Activated CD4-positive, alpha-beta memory T cell treated with anti-CD3 and anti-CD28 coated beads, Interleukin-2, amount 10 ng/mL, durations not matched to agents 7 days and 5 days (primary cell): ENCODE measurements at regions of chr3 and their contacts with region 1.

Region 1: GRCh38 chr3:128969993-128970739 is 23.7 kb downstream of the CFAP92 start:
- DNase-seq: peak; percentile 69
- H3K4me3 Mint-ChIP-seq: no peak overlapping the region
- H3K27ac Mint-ChIP-seq: no peak overlapping the region
- H3K4me1 Mint-ChIP-seq: peaks cover 10% of the 10 kb centered on the region
- H3K27me3 Mint-ChIP-seq: peaks cover 9% of the 10 kb centered on the region

Region 2: GRCh38 chr3:128910006-128910405 is 60.2 kb before region 1 on chr3:
- CTCF ChIA-PET with region 1: no interaction called
- POLR2A ChIA-PET with region 1: no interaction called
- DNase-seq: no peak
- H3K4me3 Mint-ChIP-seq: no peak overlapping the region
- H3K27ac Mint-ChIP-seq: no peak overlapping the region
- H3K4me1 Mint-ChIP-seq: no peaks in the 10 kb centered on the region
- H3K27me3 Mint-ChIP-seq: no peaks in the 10 kb centered on the region

Region 3: DNA sequence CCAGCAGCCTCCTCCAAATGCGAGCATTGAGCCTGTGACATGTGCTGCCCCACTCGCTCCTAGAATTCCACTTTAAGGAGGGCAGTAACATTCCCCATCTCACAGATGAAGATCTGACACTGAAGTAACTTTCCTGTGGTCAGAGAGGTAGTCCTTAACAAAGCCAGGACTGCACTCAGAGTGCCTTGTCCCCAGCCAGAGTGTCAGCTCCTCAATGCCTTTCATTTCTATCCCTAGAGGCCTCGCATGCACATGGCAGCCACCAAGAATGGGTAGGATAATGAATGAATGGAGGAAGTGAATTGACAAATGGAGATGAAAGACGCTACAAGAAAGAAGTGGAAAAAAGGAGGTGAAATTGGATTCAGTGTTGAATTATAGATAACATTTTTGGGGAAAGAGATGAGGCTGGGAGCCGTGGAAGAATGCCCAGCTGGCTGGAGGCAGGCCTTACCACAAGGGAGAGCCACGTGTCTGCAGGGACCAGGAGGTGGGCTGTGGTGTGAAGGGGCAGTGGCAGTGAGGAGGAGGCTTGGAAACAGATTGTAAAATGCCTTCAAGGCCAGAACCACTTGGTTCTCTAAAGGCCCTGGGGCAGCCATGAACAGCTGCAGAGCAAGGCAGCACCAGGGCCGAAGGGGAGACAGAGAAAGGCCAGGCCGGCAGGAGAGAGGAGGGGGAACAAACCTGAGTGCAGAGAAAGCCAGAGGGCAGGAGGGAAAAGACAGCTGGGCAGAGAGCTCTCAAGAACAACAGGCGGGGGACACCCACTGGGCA is 13.3 kb after region 1 on chr3:
- CTCF ChIA-PET with region 1: interaction called, 11 read pairs
- POLR2A ChIA-PET with region 1: no interaction called
- DNase-seq: no peak
- H3K4me3 Mint-ChIP-seq: no peak overlapping the region
- H3K27ac Mint-ChIP-seq: no peak overlapping the region
- H3K4me1 Mint-ChIP-seq: no peaks in the 10 kb centered on the region
- H3K27me3 Mint-ChIP-seq: peaks cover 5% of the 10 kb centered on the region

Region 4: DNA sequence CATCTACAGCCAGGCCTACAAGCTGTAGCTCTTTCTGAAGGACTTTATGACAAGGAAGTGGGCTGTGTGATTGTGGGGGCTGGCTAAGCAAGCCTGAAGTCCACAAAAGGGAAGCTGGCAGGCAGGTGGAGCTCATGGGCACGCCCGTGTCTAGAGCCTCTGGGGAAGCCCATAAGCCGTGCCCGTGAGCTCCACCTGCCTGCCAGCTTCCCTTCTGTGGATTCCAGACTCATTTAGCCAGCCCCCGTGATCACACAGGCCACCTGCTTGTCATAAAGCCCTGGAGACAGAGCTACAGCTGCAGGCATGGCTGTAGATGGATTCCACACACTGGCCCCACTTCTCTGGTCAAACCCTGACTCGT is 46.2 kb after region 1 on chr3:
- CTCF ChIA-PET with region 1: interaction called, 78 read pairs
- POLR2A ChIA-PET with region 1: interaction called, 13 read pairs
- DNase-seq: peak; percentile 68
- H3K4me3 Mint-ChIP-seq: peak overlapping the region; percentile 64
- H3K27ac Mint-ChIP-seq: peak overlapping the region; percentile 87
- H3K4me1 Mint-ChIP-seq: peaks cover 37% of the 10 kb centered on the region
- H3K27me3 Mint-ChIP-seq: no peaks in the 10 kb centered on the region

Region 5: DNA sequence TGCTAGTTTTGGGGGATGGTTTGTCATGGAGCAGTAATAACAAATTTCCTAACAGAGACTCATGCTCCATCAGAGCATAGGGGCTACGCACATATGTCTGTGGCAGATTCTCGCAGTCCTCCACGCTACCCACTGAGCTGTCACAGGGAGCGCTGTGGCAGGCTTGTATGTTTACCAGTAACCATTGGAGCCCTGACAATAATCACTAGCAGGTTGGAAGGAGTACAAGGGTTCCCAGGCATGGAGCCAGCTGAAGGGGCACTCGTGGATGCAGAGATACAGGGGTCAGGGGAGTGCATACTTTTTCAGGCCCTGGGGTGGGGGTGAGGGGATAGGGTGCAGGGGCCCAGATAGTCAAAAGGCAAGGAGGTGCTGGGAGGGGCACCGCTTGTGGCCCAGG is 82.5 kb after region 1 on chr3:
- CTCF ChIA-PET with region 1: interaction called, 62 read pairs
- POLR2A ChIA-PET with region 1: interaction called, 6 read pairs
- DNase-seq: no peak
- H3K4me3 Mint-ChIP-seq: no peak overlapping the region
- H3K27ac Mint-ChIP-seq: peak overlapping the region; percentile 28
- H3K4me1 Mint-ChIP-seq: peaks cover 7% of the 10 kb centered on the region
- H3K27me3 Mint-ChIP-seq: peaks cover 18% of the 10 kb centered on the region

Region 6: DNA sequence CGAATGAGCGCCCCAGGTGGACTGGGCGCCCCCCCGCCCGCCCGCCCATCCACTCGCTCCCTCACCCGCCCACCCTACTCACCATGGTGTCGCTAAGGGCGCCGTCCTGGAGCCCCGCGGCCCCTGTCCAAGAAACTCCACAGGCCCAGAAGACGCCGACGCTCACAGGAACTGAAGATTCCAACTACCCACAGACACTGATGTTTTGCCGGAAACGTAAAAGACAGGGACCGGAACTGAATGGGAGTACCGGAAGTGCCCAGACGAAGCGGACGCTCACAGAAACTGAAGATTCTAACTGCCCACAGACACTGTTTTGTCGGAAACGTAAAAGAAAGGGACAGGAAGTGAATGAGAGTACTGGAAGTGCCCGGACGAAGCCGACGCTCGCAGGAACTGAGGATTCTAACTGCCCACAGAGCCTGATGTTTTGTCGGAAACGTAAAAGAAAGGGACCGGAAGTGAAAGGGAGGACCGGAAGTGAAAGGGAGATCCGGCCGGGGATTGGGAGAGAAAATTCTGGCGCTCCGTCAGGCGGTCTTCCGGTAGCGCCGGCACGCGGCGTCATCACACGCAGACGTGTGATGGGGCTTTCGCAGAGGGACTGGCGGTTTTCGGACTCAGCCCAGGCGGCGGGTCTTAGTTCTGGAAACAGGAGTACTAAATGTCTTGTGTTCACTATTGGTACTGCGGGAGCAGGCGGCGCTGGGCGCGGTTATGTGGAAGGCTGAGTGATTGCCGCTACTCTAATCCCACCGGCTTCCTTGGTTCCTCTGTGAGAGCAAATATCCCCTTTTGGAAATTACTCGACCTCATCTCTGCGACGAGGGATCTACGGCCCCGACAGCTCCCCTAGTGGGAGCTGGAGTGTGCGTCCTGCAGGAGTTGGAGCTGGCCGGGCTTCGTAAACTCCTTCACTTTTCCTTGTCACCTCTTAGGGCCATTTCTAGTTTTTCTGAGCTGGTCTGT is 191.0 kb after region 1 on chr3 and contains the start of gene ISY1:
- CTCF ChIA-PET with region 1: interaction called, 25 read pairs
- POLR2A ChIA-PET with region 1: interaction called, 3 read pairs
- DNase-seq: peak; percentile 88
- H3K4me3 Mint-ChIP-seq: peak within 1 kb of the TSS; percentile 87
- H3K27ac Mint-ChIP-seq: peak within 1 kb of the TSS; percentile 94
- H3K4me1 Mint-ChIP-seq: peaks cover 45% of the 10 kb centered on the region
- H3K27me3 Mint-ChIP-seq: no peaks in the 10 kb centered on the region
- total RNA-seq, gene ISY1: 63.9 to 66.2 TPM